Dendritic cell treated with granulocyte-macrophage colony-stimulating factor and Interleukin-4, amounts not matched to agents 40 ng/mL and 50 ng/mL, for 4 days (primary cell): ENCODE measurements at regions of chr11 and their contacts with region 1.

Region 1: DNA sequence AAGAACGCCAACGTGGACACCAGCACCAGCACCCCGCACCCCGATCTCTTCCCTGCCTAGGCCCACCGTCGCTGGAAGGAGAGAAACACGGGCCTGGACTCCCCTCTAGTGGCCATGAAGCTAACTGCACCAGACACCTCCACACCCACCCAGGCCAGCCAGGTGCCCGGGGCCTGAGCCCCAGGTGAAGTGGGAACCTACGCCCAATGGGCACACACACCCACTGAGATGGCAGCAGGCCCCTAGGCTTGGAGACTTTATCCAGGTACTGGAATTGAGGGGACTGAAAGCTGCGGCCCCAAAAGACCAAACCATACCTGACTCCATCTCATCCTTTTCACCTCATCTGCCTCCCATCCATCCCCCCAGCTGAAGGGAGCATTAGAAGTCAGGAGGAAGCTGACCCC is 81.0 kb downstream of the BUD13 start:
- H3K4me3 Mint-ChIP-seq: no peak overlapping the region
- H3K27ac Mint-ChIP-seq: no peak overlapping the region
- H3K4me1 Mint-ChIP-seq: peaks cover 5% of the 10 kb centered on the region
- H3K27me3 Mint-ChIP-seq: peaks cover 4% of the 10 kb centered on the region

Region 2: GRCh38 chr11:115334932-115335788 is 1356.6 kb before region 1 on chr11:
- intact Hi-C with region 1: loop called (anchors 10 kb)
- H3K4me3 Mint-ChIP-seq: no peak overlapping the region
- H3K27ac Mint-ChIP-seq: no peak overlapping the region
- H3K4me1 Mint-ChIP-seq: no peaks in the 10 kb centered on the region
- H3K27me3 Mint-ChIP-seq: no peaks in the 10 kb centered on the region

Region 3: GRCh38 chr11:116217006-116217405 is 474.8 kb before region 1 on chr11:
- intact Hi-C with region 1: loop called (anchors 5 kb)
- H3K4me3 Mint-ChIP-seq: no peak overlapping the region
- H3K27ac Mint-ChIP-seq: no peak overlapping the region
- H3K4me1 Mint-ChIP-seq: no peaks in the 10 kb centered on the region
- H3K27me3 Mint-ChIP-seq: peaks cover 2% of the 10 kb centered on the region

Region 4: DNA sequence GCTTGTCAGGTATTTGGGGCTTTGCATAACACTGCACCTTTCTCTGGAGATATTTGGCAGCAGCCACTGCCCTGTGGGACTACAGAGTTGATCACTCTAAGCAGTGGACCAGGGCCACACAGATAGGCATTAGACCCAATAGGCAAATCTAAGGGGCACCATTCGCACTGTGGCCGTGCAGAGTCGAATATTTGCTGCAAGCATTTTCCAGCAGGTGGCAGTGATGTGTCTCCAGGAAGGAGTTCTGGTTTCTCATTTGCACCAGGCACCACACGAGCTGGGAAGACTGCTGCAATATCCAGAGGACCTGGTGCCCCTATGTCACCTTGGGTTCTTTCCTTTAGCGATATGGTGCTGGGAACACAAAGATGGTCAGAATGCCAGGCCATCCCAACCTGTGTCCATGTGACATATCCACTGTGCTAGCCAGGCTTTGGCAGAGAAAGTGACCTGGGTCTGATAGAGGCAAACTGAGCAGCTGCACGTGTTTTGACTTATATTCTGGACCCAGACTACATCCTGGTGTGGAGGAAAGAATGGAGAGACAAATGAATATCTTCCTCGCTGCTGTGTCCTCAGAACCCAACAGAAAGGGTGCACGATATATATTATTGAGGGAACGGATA is 237.6 kb before region 1 on chr11:
- intact Hi-C with region 1: loop called (anchors 5 kb)
- H3K4me3 Mint-ChIP-seq: no peak overlapping the region
- H3K27ac Mint-ChIP-seq: no peak overlapping the region
- H3K4me1 Mint-ChIP-seq: no peaks in the 10 kb centered on the region
- H3K27me3 Mint-ChIP-seq: peaks cover 4% of the 10 kb centered on the region

Region 5: DNA sequence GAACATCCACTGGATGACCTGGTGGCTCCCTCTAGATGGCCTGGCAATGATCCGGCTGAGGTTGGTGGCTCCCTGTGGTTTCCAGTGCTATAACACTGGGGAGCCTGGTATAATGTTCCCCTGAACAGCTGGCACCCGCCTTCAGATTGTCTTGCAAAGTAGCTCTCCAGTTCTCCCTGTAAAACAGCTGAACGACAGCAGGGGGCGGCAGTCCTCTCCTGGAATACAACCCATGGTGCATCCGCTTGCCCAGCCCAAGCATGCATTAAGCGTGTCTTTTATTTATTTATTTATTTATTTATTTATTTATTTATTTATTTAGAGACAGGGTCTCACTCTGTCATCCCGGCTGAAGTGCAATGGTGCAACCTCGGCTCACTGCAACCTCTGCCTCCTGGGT is 177.9 kb before region 1 on chr11:
- intact Hi-C with region 1: loop called (anchors 5 kb)
- H3K4me3 Mint-ChIP-seq: no peak overlapping the region
- H3K27ac Mint-ChIP-seq: no peak overlapping the region
- H3K4me1 Mint-ChIP-seq: no peaks in the 10 kb centered on the region
- H3K27me3 Mint-ChIP-seq: peaks cover 2% of the 10 kb centered on the region

Region 6: GRCh38 chr11:116678887-116679286 is 12.9 kb before region 1 on chr11:
- intact Hi-C with region 1: no loop called
- H3K4me3 Mint-ChIP-seq: no peak overlapping the region
- H3K27ac Mint-ChIP-seq: no peak overlapping the region
- H3K4me1 Mint-ChIP-seq: no peaks in the 10 kb centered on the region
- H3K27me3 Mint-ChIP-seq: peaks cover 11% of the 10 kb centered on the region